Activated CD4-positive, alpha-beta T cell treated with anti-CD3 and anti-CD28 coated beads, Interleukin-2, amount 10 ng/mL, durations not matched to agents 24 days and 14 days (primary cell): ENCODE measurements at regions of chr6 and their contacts with region 1.

Region 1: GRCh38 chr6:30556066-30556905 is at the start of gene GNL1:
- DNase-seq: peak; percentile 99
- H3K4me3 Mint-ChIP-seq: peak within 1 kb of the TSS; percentile 89
- H3K27ac Mint-ChIP-seq: peak within 1 kb of the TSS; percentile 97
- H3K4me1 Mint-ChIP-seq: peaks cover 29% of the 10 kb centered on the region
- H3K27me3 Mint-ChIP-seq: no peaks in the 10 kb centered on the region
- total RNA-seq, gene GNL1: 80.9 and 93.0 TPM in 2 replicates

Region 2: GRCh38 chr6:30066577-30067459 is 489.5 kb before region 1 on chr6 and contains the start of gene PPP1R11:
- intact Hi-C with region 1: loop called (anchors 10 kb)
- DNase-seq: peak; percentile 99
- H3K4me3 Mint-ChIP-seq: peak within 1 kb of the TSS; percentile 93
- H3K27ac Mint-ChIP-seq: peak within 1 kb of the TSS; percentile 99
- H3K4me1 Mint-ChIP-seq: peaks cover 45% of the 10 kb centered on the region
- H3K27me3 Mint-ChIP-seq: peaks cover 16% of the 10 kb centered on the region
- total RNA-seq, gene PPP1R11: 60.9 and 61.1 TPM in 2 replicates

Region 3: DNA sequence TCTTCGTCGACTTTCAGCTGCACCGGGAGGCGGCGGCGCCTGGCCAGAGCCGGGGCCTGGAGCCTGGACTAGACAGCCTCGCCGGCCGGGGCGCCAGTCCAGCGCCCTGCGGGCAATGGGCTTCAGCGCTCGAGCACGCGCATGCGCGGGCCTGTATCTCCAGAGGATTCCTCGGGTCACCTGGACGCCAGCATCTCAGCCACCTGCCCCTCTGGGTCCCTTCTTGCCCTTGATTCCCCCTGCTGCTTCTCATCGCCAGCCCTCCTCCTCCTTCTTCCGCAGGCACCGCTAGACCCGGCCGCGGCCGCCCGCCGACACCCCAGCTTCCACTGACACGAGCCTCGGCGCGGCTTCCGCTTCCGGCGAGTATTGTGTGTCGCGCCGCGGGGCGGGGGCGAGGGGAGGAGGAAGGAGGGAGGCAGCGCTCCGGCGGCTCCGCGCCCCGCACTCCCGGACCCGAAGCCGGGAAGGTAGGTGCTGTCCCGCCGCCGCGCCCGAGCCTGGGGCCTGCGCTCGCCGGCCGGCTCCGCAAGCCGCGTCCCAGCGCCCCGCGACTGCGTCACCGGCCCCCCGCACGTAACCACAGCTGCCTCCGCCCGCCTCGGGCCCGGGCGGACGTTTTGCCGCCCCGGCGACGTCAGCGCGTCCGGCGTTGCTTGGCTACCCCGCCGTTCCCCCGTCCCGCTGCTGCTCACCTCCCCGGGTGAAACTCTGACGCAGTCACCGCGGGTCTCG is 229.6 kb before region 1 on chr6 and contains the start of gene TRIM39:
- intact Hi-C with region 1: loop called (anchors 2 kb)
- DNase-seq: peak; percentile 97
- H3K4me3 Mint-ChIP-seq: peak within 1 kb of the TSS; percentile 96
- H3K27ac Mint-ChIP-seq: peak within 1 kb of the TSS; percentile 99
- H3K4me1 Mint-ChIP-seq: peaks cover 49% of the 10 kb centered on the region
- H3K27me3 Mint-ChIP-seq: no peaks in the 10 kb centered on the region
- total RNA-seq, gene TRIM39: 12.5 and 13.7 TPM in 2 replicates

Region 4: DNA sequence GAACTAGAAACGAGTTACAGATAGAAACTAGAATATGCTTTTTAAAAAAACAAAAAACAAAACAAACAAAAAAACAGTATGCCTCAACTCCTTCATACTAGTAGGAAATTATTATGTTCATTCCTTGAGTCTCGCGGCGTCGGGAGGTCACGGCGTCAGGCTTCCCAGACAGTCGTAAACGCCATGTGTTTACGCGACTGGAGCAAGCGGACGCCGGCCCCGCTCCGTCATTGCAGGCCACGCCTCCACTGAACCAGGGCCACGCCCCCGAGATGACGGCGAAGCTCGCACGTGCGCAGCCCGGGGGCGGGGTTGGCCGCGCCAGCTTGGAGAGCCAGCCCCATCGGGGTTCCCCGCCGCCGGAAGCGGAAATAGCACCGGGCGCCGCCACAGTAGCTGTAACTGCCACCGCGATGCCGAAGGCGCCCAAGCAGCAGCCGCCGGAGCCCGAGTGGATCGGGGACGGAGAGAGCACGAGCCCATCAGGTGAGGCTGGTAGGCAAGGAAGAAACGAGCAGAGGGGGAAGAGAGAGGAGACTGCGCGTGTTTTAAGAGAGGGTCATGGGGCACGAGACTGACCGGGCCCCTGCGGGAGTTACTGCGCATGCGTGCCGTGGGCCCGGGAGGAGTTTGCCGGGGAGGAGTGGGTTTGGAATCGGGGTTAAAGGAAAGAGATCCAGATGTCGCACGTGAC is 14.9 kb after region 1 on chr6 and contains the start of gene ABCF1:
- intact Hi-C with region 1: loop called (anchors 1 kb)
- DNase-seq: peak; percentile 100
- H3K4me3 Mint-ChIP-seq: peak within 1 kb of the TSS; percentile 92
- H3K27ac Mint-ChIP-seq: peak within 1 kb of the TSS; percentile 99
- H3K4me1 Mint-ChIP-seq: peaks cover 59% of the 10 kb centered on the region
- H3K27me3 Mint-ChIP-seq: no peaks in the 10 kb centered on the region
- total RNA-seq, gene ABCF1: 123 and 125 TPM in 2 replicates

Region 5: GRCh38 chr6:30600451-30600961 is 44.2 kb after region 1 on chr6:
- intact Hi-C with region 1: no loop called
- DNase-seq: no peak
- H3K4me3 Mint-ChIP-seq: no peak overlapping the region
- H3K27ac Mint-ChIP-seq: peak overlapping the region; percentile 9
- H3K4me1 Mint-ChIP-seq: peaks cover 16% of the 10 kb centered on the region
- H3K27me3 Mint-ChIP-seq: no peaks in the 10 kb centered on the region

Region 6: DNA sequence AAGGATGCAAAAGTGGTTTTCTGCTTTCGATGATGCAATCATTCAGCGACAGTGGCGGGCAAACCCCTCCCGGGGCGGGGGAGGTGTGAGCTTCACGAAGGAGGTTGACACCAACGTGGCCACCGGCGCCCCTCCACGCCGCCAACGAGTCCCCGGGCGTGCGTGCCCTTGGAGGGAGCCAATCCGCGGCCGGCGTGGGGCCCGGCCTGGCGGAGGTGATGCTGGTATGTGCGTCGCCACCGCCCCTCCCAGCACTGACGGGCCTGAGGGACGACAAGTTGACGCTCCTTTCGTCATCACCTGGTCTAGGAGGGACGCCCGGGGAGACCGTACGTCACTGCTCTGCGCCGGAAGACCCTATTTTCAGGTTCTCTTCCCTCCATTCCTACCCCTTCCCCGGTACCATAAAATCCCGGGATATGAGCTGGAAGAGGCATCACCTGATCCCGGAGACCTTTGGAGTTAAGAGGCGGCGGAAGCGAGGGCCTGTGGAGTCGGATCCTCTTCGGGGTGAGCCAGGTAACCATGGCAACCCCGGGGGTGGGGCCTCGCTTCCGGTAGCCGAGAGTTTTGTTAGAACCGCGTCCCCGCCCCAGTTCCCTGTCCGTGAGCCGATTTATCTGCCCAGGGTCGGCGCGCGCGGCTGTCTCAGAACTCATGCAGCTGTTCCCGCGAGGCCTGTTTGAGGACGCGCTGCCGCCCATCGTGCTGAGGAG is 1415.9 kb after region 1 on chr6 and contains the start of gene DXO:
- intact Hi-C with region 1: loop called (anchors 10 kb)
- DNase-seq: peak; percentile 99
- H3K4me3 Mint-ChIP-seq: peak within 1 kb of the TSS; percentile 99
- H3K27ac Mint-ChIP-seq: peak within 1 kb of the TSS; percentile 100
- H3K4me1 Mint-ChIP-seq: peaks cover 41% of the 10 kb centered on the region
- H3K27me3 Mint-ChIP-seq: peaks cover 2% of the 10 kb centered on the region
- total RNA-seq, gene DXO: 13.2 and 14.1 TPM in 2 replicates